ENCODE measurements at regions of chr1 and their contacts with region 1.

Region 1: DNA sequence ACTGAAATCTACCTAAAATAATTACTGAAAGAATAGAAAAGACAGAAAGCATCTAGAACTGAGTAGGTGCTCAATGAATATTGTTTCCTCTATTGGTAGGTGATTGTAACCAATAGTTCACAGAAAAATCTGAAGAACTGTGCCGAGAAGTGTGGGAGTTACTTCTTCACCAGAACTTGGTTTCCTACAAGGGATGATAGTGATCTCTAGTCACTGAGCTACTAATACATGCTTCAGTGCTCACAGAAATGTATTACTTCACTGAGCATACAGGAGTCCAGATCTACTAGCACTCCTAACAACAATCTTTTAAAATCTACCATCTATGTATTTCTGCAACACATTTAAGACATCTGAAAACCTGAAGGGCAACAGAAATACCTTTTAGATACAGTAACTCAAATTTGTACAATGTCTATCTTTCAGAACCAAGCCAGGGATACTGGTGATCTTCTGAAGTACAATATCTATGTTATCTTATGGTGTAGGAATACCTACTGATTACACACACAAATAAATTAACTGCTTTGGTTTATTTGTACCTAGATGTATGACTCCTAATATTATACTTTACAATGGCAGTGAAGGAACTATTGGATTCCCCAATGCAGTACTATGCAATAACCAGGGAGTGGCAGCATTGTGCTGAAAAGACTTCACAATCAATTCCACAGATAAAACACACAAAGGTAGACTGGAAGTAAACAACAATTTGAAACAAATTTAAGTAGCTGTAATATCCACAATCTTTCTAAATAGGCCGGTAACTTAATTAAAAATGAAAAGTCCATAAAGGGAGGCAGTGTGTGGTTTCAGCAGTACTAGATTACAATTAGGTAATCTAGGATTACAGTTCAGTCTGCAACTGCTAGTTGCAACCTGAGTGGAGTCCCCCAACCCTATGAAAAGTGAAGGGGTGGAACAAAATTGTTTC is 243.0 kb downstream of the SLC45A1 start:
- DNase-seq: no peak
- H3K4me3 ChIP-seq: no peak overlapping the region
- H3K27ac ChIP-seq: no peak overlapping the region
- H3K4me1 ChIP-seq: peaks cover 0 to 6% (median 3%) of the 10 kb centered on the region in 4 experiments; a peak in 2 of 7 replicates
- H3K27me3 ChIP-seq: no peaks in the 10 kb centered on the region
- CTCF ChIP-seq: peak in 2 of 3 experiments; percentile 66 to 72; a peak in 2 of 4 replicates
- EP300 ChIP-seq: no peak
- POLR2A ChIP-seq: no peak
- RAD21 ChIP-seq: peak; percentile 86 to 87

Region 2: DNA sequence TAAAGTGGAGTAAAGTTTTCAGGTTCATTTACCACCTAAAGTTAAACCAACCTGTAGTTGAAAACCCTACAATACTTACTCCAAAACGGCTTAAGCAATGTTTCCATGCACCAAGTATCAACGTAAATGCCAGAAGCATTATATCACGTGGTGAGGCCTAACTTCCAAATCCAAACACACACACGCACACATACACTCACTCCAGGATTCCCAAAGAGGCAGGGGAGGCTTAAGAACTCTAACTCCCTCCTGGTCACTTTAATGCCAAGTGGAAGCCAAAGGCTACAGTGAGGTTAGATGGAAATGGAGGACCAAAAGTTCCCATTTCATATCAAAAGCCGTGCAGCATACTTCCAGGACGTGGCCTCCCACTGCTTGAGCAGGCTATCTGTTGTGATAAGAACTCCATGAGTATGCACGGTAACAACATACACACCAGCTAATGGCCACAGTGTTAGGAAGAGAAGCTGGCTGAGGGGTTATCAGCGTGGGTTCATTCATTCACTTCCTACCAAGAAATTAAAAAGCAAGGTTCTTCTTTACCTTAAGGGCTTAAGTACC is 18.8 kb before region 1 on chr1:
- CTCF ChIA-PET with region 1: no interaction called
- POLR2A ChIA-PET with region 1: no interaction called
- DNase-seq: no peak
- H3K4me3 ChIP-seq: no peak overlapping the region
- H3K27ac ChIP-seq: no peak overlapping the region
- H3K4me1 ChIP-seq: no peaks in the 10 kb centered on the region
- H3K27me3 ChIP-seq: no peaks in the 10 kb centered on the region
- CTCF ChIP-seq: no peak
- EP300 ChIP-seq: no peak
- POLR2A ChIP-seq: no peak
- RAD21 ChIP-seq: no peak

Region 3: DNA sequence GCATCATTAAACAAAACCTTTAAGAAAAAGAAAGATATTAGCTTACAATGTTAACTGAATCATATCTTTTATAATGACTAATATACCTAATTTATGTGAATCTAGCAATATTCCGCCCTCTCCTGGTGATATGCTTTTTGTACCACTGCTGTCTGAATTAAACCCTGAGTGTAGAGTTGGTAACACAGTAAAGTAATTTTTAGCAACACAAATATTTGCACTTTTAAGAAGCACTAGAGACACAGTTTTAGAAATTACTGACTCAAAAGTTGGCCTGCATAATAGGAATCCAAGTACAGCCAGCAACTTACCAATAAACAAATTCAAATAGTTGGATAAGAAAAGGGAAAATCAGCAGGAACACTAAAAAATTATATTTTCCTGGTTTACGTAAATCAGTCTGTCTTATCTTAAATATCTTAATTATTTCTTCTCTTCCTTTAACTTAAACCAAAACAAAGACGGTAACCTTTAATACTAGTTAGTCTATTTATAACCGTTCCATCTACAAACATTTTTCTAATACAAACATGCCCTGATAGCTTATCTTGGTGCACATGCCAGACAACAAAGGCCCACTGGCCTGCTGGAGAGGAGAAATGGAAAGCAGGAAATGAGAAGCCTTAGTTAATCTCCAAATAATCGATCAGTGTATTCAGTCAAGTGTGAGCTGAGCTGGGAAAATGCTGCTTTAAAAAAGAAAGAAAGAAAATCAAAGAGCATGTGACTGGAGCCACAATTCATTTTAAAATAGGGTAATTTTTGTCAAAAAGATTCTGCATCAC is 10.5 kb after region 1 on chr1:
- CTCF ChIA-PET with region 1: interaction called, 34 read pairs
- POLR2A ChIA-PET with region 1: no interaction called
- DNase-seq: no peak
- H3K4me3 ChIP-seq: no peak overlapping the region
- H3K27ac ChIP-seq: no peak overlapping the region
- H3K4me1 ChIP-seq: peaks cover 0 to 4% (median under 1%) of the 10 kb centered on the region in 4 experiments; a peak in 2 of 7 replicates
- H3K27me3 ChIP-seq: no peaks in the 10 kb centered on the region
- CTCF ChIP-seq: no peak
- EP300 ChIP-seq: no peak
- POLR2A ChIP-seq: no peak
- RAD21 ChIP-seq: no peak

Region 4: DNA sequence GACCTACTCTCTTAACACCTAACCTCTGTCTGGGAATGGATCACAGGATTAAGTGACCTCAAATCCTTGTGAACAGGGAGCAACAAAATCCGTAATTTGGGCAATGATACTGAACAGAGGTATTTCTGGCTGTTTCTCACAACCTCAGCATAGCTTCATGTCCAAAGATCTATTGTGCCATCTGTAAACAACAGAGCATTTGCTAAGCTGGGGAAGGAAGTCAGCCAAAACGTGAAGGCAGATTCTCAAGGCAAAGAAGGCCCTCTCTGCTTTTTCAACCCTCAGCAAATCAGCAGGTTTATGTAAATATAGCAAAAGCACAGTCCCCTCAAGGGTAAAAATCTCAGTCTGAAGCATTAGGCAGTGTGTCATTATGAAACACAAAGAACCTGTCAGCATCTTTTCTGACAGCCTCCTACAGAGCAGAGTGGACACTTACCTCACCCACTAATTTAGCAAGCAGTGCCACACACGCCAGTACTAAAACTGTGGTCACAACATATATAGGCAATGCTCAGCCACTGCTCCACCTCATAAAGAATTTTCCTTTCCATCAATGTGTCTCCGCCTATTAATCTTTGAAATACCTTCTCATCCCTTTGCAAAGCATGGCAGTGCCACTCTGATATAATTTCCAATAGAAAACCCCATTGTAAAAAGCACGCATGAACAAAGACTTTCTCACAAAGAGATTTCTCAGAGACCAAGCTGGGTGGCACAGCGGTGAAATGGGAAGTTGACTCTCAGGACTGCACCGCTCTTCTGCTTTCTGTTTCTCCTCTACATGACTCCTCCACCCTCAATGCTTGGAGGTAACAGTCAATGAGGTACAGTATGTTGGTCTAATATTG is 68.6 kb after region 1 on chr1:
- CTCF ChIA-PET with region 1: no interaction called
- POLR2A ChIA-PET with region 1: no interaction called
- DNase-seq: no peak
- H3K4me3 ChIP-seq: no peak overlapping the region
- H3K27ac ChIP-seq: no peak overlapping the region
- H3K4me1 ChIP-seq: peaks cover 0 to 22% (median 11%) of the 10 kb centered on the region in 4 experiments
- H3K27me3 ChIP-seq: no peaks in the 10 kb centered on the region
- CTCF ChIP-seq: no peak
- EP300 ChIP-seq: no peak
- POLR2A ChIP-seq: no peak
- RAD21 ChIP-seq: no peak